Left lung (tissue), 14 donors: ENCODE measurements at regions of chr14 and their contacts with region 1.

Region 1: GRCh38 chr14:53055003-53055402 is 98.1 kb downstream of the DDHD1 start:
- DNase-seq: peak in 2 of 4 donors; percentile 48 to 54
- ATAC-seq: peak; percentile 85
- H3K4me3 ChIP-seq: no peak overlapping the region
- H3K27ac ChIP-seq: no peak overlapping the region
- H3K4me1 ChIP-seq: no peaks in the 10 kb centered on the region
- H3K27me3 ChIP-seq: no peaks in the 10 kb centered on the region
- CTCF ChIP-seq: peak; percentile 62 to 68

Region 2: DNA sequence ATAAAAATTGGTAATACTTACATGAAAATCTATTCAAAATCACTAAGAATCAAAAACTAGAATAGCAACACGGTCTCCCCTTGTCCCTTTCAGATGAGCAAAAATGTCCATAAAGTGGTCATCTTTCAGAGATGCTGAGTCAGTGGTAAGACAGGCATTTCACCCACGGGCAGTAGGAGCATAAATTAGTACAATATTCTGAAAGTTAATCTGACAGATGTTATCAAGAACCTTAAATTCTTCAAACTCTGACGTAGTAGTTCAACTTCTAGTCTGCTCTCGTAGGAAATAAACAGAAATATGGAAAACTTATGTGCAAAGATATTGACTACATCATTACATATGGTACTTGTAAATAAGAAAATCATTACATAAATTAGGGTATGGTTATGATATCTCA is 230.5 kb before region 1 on chr14:
- intact Hi-C with region 1: loop called in 1 of 2 experiments (anchors 5 kb)
- DNase-seq: no peak
- ATAC-seq: no peak
- H3K4me3 ChIP-seq: no peak overlapping the region
- H3K27ac ChIP-seq: no peak overlapping the region
- H3K4me1 ChIP-seq: no peaks in the 10 kb centered on the region
- H3K27me3 ChIP-seq: no peaks in the 10 kb centered on the region
- CTCF ChIP-seq: no peak

Region 3: GRCh38 chr14:52961060-52961639 is 93.9 kb before region 1 on chr14:
- intact Hi-C with region 1: loop called in 1 of 2 experiments (anchors 10 kb)
- DNase-seq: peak in 1 of 4 donors; percentile 51
- ATAC-seq: peak; percentile 99
- H3K4me3 ChIP-seq: no peak overlapping the region
- H3K27ac ChIP-seq: peak overlapping the region in 1 of 2 donors; percentile 45
- H3K4me1 ChIP-seq: peaks cover 3 to 14% of the 10 kb centered on the region in 2 donors
- H3K27me3 ChIP-seq: no peaks in the 10 kb centered on the region
- CTCF ChIP-seq: peak; percentile 39 to 43

Region 4: DNA sequence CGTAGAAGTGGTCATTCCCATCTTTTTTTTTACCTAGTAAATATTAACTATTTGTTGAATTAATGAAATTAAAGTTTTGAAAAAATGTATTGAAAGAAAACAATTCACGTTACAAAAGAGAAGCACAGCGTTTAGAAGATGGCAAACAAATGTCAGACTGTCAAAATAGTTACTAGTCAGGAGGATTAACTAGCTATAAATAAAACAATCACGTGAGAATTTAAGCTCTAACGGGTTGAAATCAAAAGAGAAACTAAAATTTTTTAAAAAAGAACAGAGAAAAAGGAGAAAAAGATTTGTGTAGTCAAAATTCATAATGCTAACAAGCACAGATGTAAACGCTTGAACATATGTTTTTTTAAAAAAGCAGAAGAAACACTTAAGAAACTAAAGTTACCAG is 71.7 kb after region 1 on chr14:
- intact Hi-C with region 1: no loop called
- DNase-seq: no peak
- ATAC-seq: no peak
- H3K4me3 ChIP-seq: no peak overlapping the region
- H3K27ac ChIP-seq: peak overlapping the region; percentile 48 to 57
- H3K4me1 ChIP-seq: peaks cover 0 to 13% of the 10 kb centered on the region in 2 donors
- H3K27me3 ChIP-seq: no peaks in the 10 kb centered on the region
- CTCF ChIP-seq: no peak